ENCODE measurements at regions of chr6 and their contacts with region 1.

Region 1: DNA sequence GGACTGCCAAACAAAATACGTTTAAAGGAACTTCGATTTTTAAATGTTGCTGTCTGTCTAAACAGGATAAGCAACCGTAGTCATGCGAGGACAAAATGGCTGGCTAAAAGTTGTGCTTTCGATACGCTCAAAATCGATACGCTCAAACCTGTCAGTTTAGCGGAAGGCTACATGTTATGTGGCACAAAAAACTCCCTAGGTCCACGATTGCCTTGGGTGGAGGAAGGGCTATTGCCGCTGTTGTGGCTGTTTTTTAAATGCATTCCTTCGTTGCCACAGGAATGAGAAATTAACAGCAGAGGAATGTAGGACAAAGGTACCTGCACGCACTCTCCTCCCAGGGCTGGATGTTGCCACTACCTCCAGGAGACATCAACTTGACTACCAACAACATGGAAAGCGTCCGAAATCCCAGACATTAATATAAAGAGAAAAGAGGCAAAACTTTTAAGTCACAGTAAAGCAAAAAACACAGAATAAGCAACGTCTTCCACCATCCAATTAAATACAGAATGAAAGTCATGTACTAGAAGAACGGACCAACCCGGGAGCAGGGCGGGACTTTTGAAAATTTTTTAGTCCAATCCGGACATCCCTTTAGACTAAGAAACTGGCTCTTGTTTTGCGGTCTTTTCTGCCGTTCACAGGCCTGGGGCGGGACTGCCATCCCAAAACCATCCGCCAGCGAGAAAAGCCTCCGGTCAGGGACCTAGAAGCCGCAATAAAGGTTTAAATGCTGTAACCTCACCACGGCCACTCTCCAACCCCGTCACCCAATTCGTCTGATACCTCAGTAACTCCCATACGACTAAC is 32.2 kb upstream of the HFE start:
- DNase-seq: peak; percentile 80 to 92 (median 89)
- ATAC-seq: peak; percentile 79 to 89 (median 84)
- H3K4me3 ChIP-seq: peak overlapping the region; percentile 59 to 80 (median 74)
- H3K27ac ChIP-seq: peak overlapping the region; percentile 81 to 98 (median 95)
- H3K4me1 ChIP-seq: peaks cover 0 to 24% (median 10%) of the 10 kb centered on the region in 12 donors
- H3K27me3 ChIP-seq: no peaks in the 10 kb centered on the region
- CTCF ChIP-seq: peak in 2 of 12 donors; percentile 5 to 22
- POLR2A ChIP-seq: no peak

Region 2: DNA sequence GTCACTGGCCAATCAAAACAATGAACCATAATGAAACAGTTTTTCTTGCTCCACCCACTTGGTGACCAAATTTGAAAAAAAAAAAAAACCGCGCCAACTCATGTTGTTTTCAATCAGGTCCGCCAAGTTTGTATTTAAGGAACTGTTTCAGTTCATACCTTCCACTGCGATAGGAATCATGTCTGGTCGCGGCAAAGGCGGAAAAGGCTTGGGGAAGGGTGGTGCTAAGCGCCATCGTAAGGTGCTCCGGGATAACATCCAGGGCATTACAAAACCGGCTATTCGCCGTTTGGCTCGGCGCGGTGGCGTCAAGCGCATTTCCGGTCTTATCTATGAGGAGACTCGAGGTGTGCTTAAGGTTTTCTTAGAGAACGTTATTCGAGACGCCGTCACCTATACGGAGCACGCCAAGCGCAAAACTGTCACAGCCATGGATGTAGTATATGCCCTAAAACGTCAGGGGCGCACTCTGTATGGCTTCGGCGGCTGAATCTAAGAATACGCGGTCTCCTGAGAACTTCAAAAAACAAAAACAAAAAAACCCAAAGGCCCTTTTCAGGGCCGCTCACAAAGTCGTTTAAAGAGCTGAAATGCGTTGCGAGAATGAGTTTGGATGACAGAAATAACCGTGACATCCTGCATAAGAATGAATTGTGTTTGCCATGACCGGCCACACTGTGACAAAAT is 48.9 kb after region 1 on chr6:
- intact Hi-C with region 1: loop called in 5 of 10 experiments (anchors 2 kb)
- DNase-seq: peak; percentile 86 to 90 (median 87)
- ATAC-seq: peak; percentile 81 to 95 (median 93)
- H3K4me3 ChIP-seq: peak overlapping the region; percentile 5 to 69 (median 60)
- H3K27ac ChIP-seq: peak overlapping the region; percentile 18 to 90 (median 77)
- H3K4me1 ChIP-seq: peaks cover 0 to 18% (median 8%) of the 10 kb centered on the region in 12 donors
- H3K27me3 ChIP-seq: no peaks in the 10 kb centered on the region
- CTCF ChIP-seq: peak in 10 of 12 donors; percentile 17 to 54 (median 36)
- POLR2A ChIP-seq: peak; percentile 37 to 95